ENCODE measurements at regions of chr3 and their contacts with region 1.

Region 1: GRCh38 chr3:100400780-100401673 is at the starts of genes LNP1 and TOMM70:
- DNase-seq: peak; percentile 98
- ATAC-seq: peak; percentile 90
- H3K4me3 Mint-ChIP-seq: peak within 1 kb of the TSS; percentile 85
- H3K27ac Mint-ChIP-seq: peak within 1 kb of the TSS; percentile 94
- H3K4me1 Mint-ChIP-seq: peaks cover 58% of the 10 kb centered on the region
- H3K27me3 Mint-ChIP-seq: no peaks in the 10 kb centered on the region
- total RNA-seq, gene LNP1: 2.3 to 2.6 TPM
- total RNA-seq, gene TOMM70: 38.9 to 46.9 TPM

Region 2: GRCh38 chr3:100277255-100277800 is 123.7 kb before region 1 on chr3:
- CTCF ChIA-PET with region 1: no interaction called
- DNase-seq: no peak
- ATAC-seq: no peak
- H3K4me3 Mint-ChIP-seq: no peak overlapping the region
- H3K27ac Mint-ChIP-seq: no peak overlapping the region
- H3K4me1 Mint-ChIP-seq: peaks cover 3% of the 10 kb centered on the region
- H3K27me3 Mint-ChIP-seq: no peaks in the 10 kb centered on the region

Region 3: GRCh38 chr3:100334488-100335351 is 66.3 kb before region 1 on chr3 and contains the start of gene NIT2:
- CTCF ChIA-PET with region 1: interaction called, 14 read pairs
- DNase-seq: peak; percentile 88
- ATAC-seq: peak; percentile 99
- H3K4me3 Mint-ChIP-seq: peak within 1 kb of the TSS; percentile 87
- H3K27ac Mint-ChIP-seq: peak within 1 kb of the TSS; percentile 89
- H3K4me1 Mint-ChIP-seq: peaks cover 20% of the 10 kb centered on the region
- H3K27me3 Mint-ChIP-seq: no peaks in the 10 kb centered on the region
- total RNA-seq, gene NIT2: 45.5 to 59.8 TPM

Region 4: GRCh38 chr3:100425316-100425715 is 24.3 kb after region 1 on chr3:
- CTCF ChIA-PET with region 1: no interaction called
- DNase-seq: no peak
- ATAC-seq: no peak
- H3K4me3 Mint-ChIP-seq: no peak overlapping the region
- H3K27ac Mint-ChIP-seq: no peak overlapping the region
- H3K4me1 Mint-ChIP-seq: no peaks in the 10 kb centered on the region
- H3K27me3 Mint-ChIP-seq: peaks cover 6% of the 10 kb centered on the region